ENCODE measurements at regions of chr7 and their contacts with region 1.

Region 1: GRCh38 chr7:16918288-16918895 is 36.6 kb upstream of the AGR3 start:
- DNase-seq: peak; percentile 58
- H3K4me3 ChIP-seq: no peak overlapping the region
- H3K27ac ChIP-seq: no peak overlapping the region
- H3K4me1 ChIP-seq: peaks cover 3% of the 10 kb centered on the region
- H3K27me3 ChIP-seq: no peaks in the 10 kb centered on the region
- CTCF ChIP-seq: peak; percentile 17 to 44
- POLR2A ChIP-seq: no peak

Region 2: GRCh38 chr7:15885678-15886077 is 1032.7 kb before region 1 on chr7:
- CTCF ChIA-PET with region 1: no interaction called
- POLR2A ChIA-PET with region 1: no interaction called
- dilution Hi-C with region 1: no loop called
- intact Hi-C with region 1: no loop called
- DNase-seq: no peak
- H3K4me3 ChIP-seq: no peak overlapping the region
- H3K27ac ChIP-seq: no peak overlapping the region
- H3K4me1 ChIP-seq: no peaks in the 10 kb centered on the region
- H3K27me3 ChIP-seq: no peaks in the 10 kb centered on the region
- CTCF ChIP-seq: no peak
- POLR2A ChIP-seq: no peak

Region 3: DNA sequence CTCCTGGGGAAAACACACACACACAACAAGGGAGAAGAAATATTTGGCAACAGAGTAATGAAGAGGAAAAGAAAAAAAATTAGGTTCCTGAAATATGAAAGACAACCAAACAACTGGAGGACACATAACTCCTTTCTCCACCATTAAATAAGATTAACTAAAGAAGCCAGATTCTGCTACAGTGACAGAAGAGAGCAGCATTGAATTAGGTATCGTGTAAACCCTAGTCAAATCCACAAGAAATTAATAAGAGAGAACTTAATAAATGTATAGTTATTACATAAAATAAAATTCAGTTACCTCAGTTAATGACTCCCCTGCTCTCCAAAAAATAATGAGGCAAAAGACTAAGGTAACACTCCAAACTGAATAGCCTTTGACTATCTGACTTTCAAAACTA is 803.8 kb before region 1 on chr7:
- CTCF ChIA-PET with region 1: no interaction called
- POLR2A ChIA-PET with region 1: no interaction called
- dilution Hi-C with region 1: no loop called
- intact Hi-C with region 1: loop called (anchors 5 kb)
- DNase-seq: peak; percentile 53
- H3K4me3 ChIP-seq: no peak overlapping the region
- H3K27ac ChIP-seq: no peak overlapping the region
- H3K4me1 ChIP-seq: no peaks in the 10 kb centered on the region
- H3K27me3 ChIP-seq: no peaks in the 10 kb centered on the region
- CTCF ChIP-seq: peak; percentile 17 to 25
- POLR2A ChIP-seq: no peak

Region 4: GRCh38 chr7:16604054-16604453 is 314.3 kb before region 1 on chr7:
- CTCF ChIA-PET with region 1: interaction called, 3 read pairs
- POLR2A ChIA-PET with region 1: no interaction called
- dilution Hi-C with region 1: no loop called
- intact Hi-C with region 1: loop called (anchors 1 kb)
- DNase-seq: peak; percentile 21
- H3K4me3 ChIP-seq: no peak overlapping the region
- H3K27ac ChIP-seq: no peak overlapping the region
- H3K4me1 ChIP-seq: no peaks in the 10 kb centered on the region
- H3K27me3 ChIP-seq: no peaks in the 10 kb centered on the region
- CTCF ChIP-seq: no peak
- POLR2A ChIP-seq: no peak

Region 5: GRCh38 chr7:16702440-16702839 is 216.0 kb before region 1 on chr7:
- CTCF ChIA-PET with region 1: interaction called, 41 read pairs
- POLR2A ChIA-PET with region 1: no interaction called
- dilution Hi-C with region 1: no loop called
- intact Hi-C with region 1: no loop called
- DNase-seq: no peak
- H3K4me3 ChIP-seq: no peak overlapping the region
- H3K27ac ChIP-seq: no peak overlapping the region
- H3K4me1 ChIP-seq: peaks cover 4% of the 10 kb centered on the region
- H3K27me3 ChIP-seq: no peaks in the 10 kb centered on the region
- CTCF ChIP-seq: no peak
- POLR2A ChIP-seq: no peak

Region 6: GRCh38 chr7:16891338-16891737 is 27.1 kb before region 1 on chr7:
- CTCF ChIA-PET with region 1: interaction called, 61 read pairs
- POLR2A ChIA-PET with region 1: no interaction called
- dilution Hi-C with region 1: no loop called
- intact Hi-C with region 1: loop called (anchors 1 kb)
- DNase-seq: peak; percentile 56
- H3K4me3 ChIP-seq: no peak overlapping the region
- H3K27ac ChIP-seq: no peak overlapping the region
- H3K4me1 ChIP-seq: no peaks in the 10 kb centered on the region
- H3K27me3 ChIP-seq: no peaks in the 10 kb centered on the region
- CTCF ChIP-seq: peak; percentile 15 to 31
- POLR2A ChIP-seq: no peak

Measured in endothelial cell of umbilical vein (primary cell).